IMR-90 (cell line): ENCODE measurements at regions of chr6 and their contacts with region 1.

Region 1: GRCh38 chr6:137415127-137415833 is 78.9 kb downstream of the OLIG3 start:
- DNase-seq: peak; percentile 53
- ATAC-seq: peak; percentile 95
- H3K4me3 ChIP-seq: peak overlapping the region; percentile 49
- H3K27ac ChIP-seq: no peak overlapping the region
- H3K4me1 ChIP-seq: no peaks in the 10 kb centered on the region
- H3K27me3 ChIP-seq: peaks cover 17% of the 10 kb centered on the region
- CTCF ChIP-seq: peak; percentile 60
- POLR2A ChIP-seq: no peak
- RAD21 ChIP-seq: peak; percentile 45

Region 2: GRCh38 chr6:137094411-137095008 is 320.8 kb before region 1 on chr6:
- CTCF ChIA-PET with region 1: interaction called, 4 read pairs
- POLR2A ChIA-PET with region 1: no interaction called
- dilution Hi-C with region 1: no loop called
- in situ Hi-C with region 1: no loop called
- intact Hi-C with region 1: loop called (anchors 1 kb)
- DNase-seq: peak; percentile 67
- ATAC-seq: peak; percentile 82
- H3K4me3 ChIP-seq: no peak overlapping the region
- H3K27ac ChIP-seq: no peak overlapping the region
- H3K4me1 ChIP-seq: no peaks in the 10 kb centered on the region
- H3K27me3 ChIP-seq: peaks cover 14% of the 10 kb centered on the region
- CTCF ChIP-seq: peak; percentile 78
- POLR2A ChIP-seq: no peak
- RAD21 ChIP-seq: peak; percentile 78

Region 3: GRCh38 chr6:137136065-137136464 is 279.2 kb before region 1 on chr6:
- CTCF ChIA-PET with region 1: no interaction called
- POLR2A ChIA-PET with region 1: no interaction called
- dilution Hi-C with region 1: no loop called
- in situ Hi-C with region 1: no loop called
- intact Hi-C with region 1: loop called (anchors 10 kb)
- DNase-seq: no peak
- ATAC-seq: no peak
- H3K4me3 ChIP-seq: no peak overlapping the region
- H3K27ac ChIP-seq: no peak overlapping the region
- H3K4me1 ChIP-seq: no peaks in the 10 kb centered on the region
- H3K27me3 ChIP-seq: no peaks in the 10 kb centered on the region
- CTCF ChIP-seq: peak; percentile 35
- POLR2A ChIP-seq: no peak
- RAD21 ChIP-seq: peak; percentile 44

Region 4: GRCh38 chr6:137271245-137272183 is 143.8 kb before region 1 on chr6:
- CTCF ChIA-PET with region 1: no interaction called
- POLR2A ChIA-PET with region 1: no interaction called
- dilution Hi-C with region 1: no loop called
- in situ Hi-C with region 1: no loop called
- intact Hi-C with region 1: loop called (anchors 1 kb)
- DNase-seq: peak; percentile 63
- ATAC-seq: peak; percentile 89
- H3K4me3 ChIP-seq: no peak overlapping the region
- H3K27ac ChIP-seq: no peak overlapping the region
- H3K4me1 ChIP-seq: no peaks in the 10 kb centered on the region
- H3K27me3 ChIP-seq: peaks cover 9% of the 10 kb centered on the region
- CTCF ChIP-seq: peak; percentile 91
- POLR2A ChIP-seq: no peak
- RAD21 ChIP-seq: peak; percentile 90

Region 5: GRCh38 chr6:137625796-137626195 is 210.5 kb after region 1 on chr6:
- CTCF ChIA-PET with region 1: no interaction called
- POLR2A ChIA-PET with region 1: no interaction called
- dilution Hi-C with region 1: no loop called
- in situ Hi-C with region 1: no loop called
- intact Hi-C with region 1: no loop called
- DNase-seq: no peak
- ATAC-seq: no peak
- H3K4me3 ChIP-seq: no peak overlapping the region
- H3K27ac ChIP-seq: no peak overlapping the region
- H3K4me1 ChIP-seq: no peaks in the 10 kb centered on the region
- H3K27me3 ChIP-seq: peaks cover 7% of the 10 kb centered on the region
- CTCF ChIP-seq: no peak
- POLR2A ChIP-seq: no peak
- RAD21 ChIP-seq: no peak